CD8-positive, alpha-beta T cell (primary cell): ENCODE measurements at regions of chr19 and their contacts with region 1.

Region 1: GRCh38 chr19:44207126-44207803 is 5.1 kb upstream of the ZNF227 start:
- DNase-seq: peak; percentile 46 to 92 (median 79)
- ATAC-seq: peak; percentile 82
- H3K4me3 ChIP-seq: peak overlapping the region; percentile 72 to 84
- H3K4me3 Mint-ChIP-seq: peak overlapping the region; percentile 89
- H3K27ac ChIP-seq: peak overlapping the region; percentile 46 to 84
- H3K27ac Mint-ChIP-seq: peak overlapping the region; percentile 89
- H3K4me1 ChIP-seq: peaks cover 8% of the 10 kb centered on the region
- H3K4me1 Mint-ChIP-seq: peaks cover 11% of the 10 kb centered on the region
- H3K27me3 ChIP-seq: peaks cover 0 to 3% of the 10 kb centered on the region in 2 experiments
- H3K27me3 Mint-ChIP-seq: peaks cover 10% of the 10 kb centered on the region
- CTCF ChIP-seq: no peak

Region 2: DNA sequence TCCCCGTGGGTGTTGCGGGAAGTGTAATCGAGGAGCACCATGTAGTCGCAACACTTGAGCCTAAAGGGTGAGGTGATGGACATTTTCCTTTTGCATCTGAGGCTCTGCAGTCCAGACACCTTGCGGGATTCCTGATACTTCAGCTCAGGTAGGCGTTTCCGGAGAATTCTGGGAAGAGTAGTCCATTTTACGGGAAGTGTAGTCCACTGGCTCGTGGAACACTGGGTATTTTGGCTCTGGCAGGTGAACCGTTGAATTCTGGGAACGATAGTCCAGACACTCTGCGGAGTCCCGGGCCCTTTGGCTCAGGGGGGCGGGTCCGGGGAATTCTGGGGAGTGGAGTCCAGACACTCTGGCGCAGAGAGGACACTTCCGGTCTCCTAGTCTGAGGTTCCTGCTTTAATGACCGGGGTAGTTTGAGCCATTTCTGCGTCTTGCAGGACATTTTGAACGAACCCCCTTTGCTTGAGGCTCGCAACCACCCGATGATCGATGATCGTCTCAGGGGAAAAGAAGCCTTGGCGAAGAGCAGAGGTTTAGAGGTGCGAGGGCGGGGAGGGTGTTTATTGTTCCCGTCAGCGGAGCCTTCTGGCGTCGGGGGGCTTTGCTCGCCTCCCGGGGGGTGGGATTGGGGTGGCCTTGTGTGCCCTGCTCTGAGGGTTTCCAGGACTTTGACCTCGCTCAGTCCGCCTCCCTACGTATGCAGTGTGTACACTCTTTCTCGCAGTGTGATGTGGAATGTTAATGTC is 155.4 kb before region 1 on chr19 and contains the start of gene ZNF223:
- CTCF ChIA-PET with region 1: no interaction called
- POLR2A ChIA-PET with region 1: no interaction called
- intact Hi-C with region 1: loop called in 1 of 2 experiments (anchors 1 kb)
- DNase-seq: peak; percentile 9 to 85 (median 68)
- ATAC-seq: peak; percentile 84
- H3K4me3 ChIP-seq: peak within 1 kb of the TSS; percentile 71 to 77
- H3K4me3 Mint-ChIP-seq: peak within 1 kb of the TSS; percentile 93
- H3K27ac ChIP-seq: peak within 1 kb of the TSS in 1 of 2 experiments; percentile 40
- H3K27ac Mint-ChIP-seq: peak within 1 kb of the TSS; percentile 85
- H3K4me1 ChIP-seq: peaks cover 11% of the 10 kb centered on the region
- H3K4me1 Mint-ChIP-seq: peaks cover 38% of the 10 kb centered on the region
- H3K27me3 ChIP-seq: no peaks in the 10 kb centered on the region
- H3K27me3 Mint-ChIP-seq: no peaks in the 10 kb centered on the region
- CTCF ChIP-seq: no peak
- total RNA-seq, gene ZNF223: 0.72 to 1.3 TPM

Region 3: DNA sequence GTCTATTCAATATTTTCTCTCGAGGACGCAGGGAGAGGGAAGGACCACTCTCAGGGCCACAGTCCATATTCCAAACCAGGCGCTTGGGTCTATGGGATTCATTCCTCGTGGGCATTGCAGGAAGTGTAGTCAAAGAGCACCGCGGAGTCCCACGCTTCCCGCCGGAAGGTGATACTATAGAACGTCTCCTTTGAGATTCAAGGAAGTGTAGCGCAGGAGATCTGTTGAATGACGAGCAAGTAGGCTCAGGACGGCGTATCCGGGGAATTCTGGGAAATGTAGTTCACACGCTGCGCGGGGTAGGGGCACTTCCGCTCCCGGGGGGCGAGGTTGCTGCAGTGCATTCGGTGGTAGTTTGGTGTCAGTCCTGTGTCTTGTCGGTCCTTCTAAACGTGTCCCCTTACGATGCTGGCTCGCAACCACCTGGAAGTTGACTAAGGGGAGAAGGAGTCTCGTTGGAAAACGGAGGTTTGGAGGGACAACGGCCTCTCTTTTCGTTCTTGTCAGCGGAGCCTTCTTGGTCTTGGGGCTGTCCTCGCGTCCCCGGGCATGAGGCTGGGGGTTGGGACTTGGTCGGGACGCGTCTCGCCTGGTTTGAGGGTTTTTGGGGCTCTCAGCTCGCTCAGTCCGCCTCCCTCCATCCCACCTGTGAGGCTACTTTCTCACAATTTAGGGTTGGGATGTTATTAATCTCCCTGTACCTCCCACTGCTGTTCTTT is 135.3 kb before region 1 on chr19 and contains the start of gene ZNF284:
- CTCF ChIA-PET with region 1: no interaction called
- POLR2A ChIA-PET with region 1: no interaction called
- intact Hi-C with region 1: loop called (anchors 1 kb)
- DNase-seq: peak; percentile 60 to 93 (median 83)
- ATAC-seq: peak; percentile 99
- H3K4me3 ChIP-seq: peak within 1 kb of the TSS; percentile 65 to 73
- H3K4me3 Mint-ChIP-seq: peak within 1 kb of the TSS; percentile 91
- H3K27ac ChIP-seq: peak within 1 kb of the TSS; percentile 2 to 59
- H3K27ac Mint-ChIP-seq: peak within 1 kb of the TSS; percentile 79
- H3K4me1 ChIP-seq: peaks cover 16% of the 10 kb centered on the region
- H3K4me1 Mint-ChIP-seq: peaks cover 36% of the 10 kb centered on the region
- H3K27me3 ChIP-seq: no peaks in the 10 kb centered on the region
- H3K27me3 Mint-ChIP-seq: no peaks in the 10 kb centered on the region
- CTCF ChIP-seq: no peak
- total RNA-seq, gene ZNF284: 0.64 to 1.2 TPM

Region 4: GRCh38 chr19:44141191-44142058 is 65.8 kb before region 1 on chr19 and contains the start of gene ZNF234:
- CTCF ChIA-PET with region 1: no interaction called
- POLR2A ChIA-PET with region 1: interaction called, 5 read pairs
- intact Hi-C with region 1: loop called (anchors 1 to 2 kb)
- DNase-seq: peak; percentile 22 to 86 (median 68)
- ATAC-seq: peak; percentile 93
- H3K4me3 ChIP-seq: peak within 1 kb of the TSS; percentile 77 to 82
- H3K4me3 Mint-ChIP-seq: peak within 1 kb of the TSS; percentile 96
- H3K27ac ChIP-seq: peak within 1 kb of the TSS; percentile 34 to 76
- H3K27ac Mint-ChIP-seq: peak within 1 kb of the TSS; percentile 85
- H3K4me1 ChIP-seq: peaks cover 17% of the 10 kb centered on the region
- H3K4me1 Mint-ChIP-seq: peaks cover 25% of the 10 kb centered on the region
- H3K27me3 ChIP-seq: no peaks in the 10 kb centered on the region
- H3K27me3 Mint-ChIP-seq: no peaks in the 10 kb centered on the region
- CTCF ChIP-seq: no peak
- total RNA-seq, gene ZNF234: 2.2 to 2.4 TPM

Region 5: GRCh38 chr19:44304659-44305193 is 97.5 kb after region 1 on chr19 and contains the start of gene ZNF235:
- CTCF ChIA-PET with region 1: interaction called, 3 read pairs
- POLR2A ChIA-PET with region 1: interaction called, 5 read pairs
- intact Hi-C with region 1: loop called (anchors 1 to 2 kb)
- DNase-seq: peak; percentile 22 to 89 (median 70)
- ATAC-seq: peak; percentile 96
- H3K4me3 ChIP-seq: peak within 1 kb of the TSS; percentile 75 to 77
- H3K4me3 Mint-ChIP-seq: peak within 1 kb of the TSS; percentile 94
- H3K27ac ChIP-seq: peak within 1 kb of the TSS; percentile 26 to 52
- H3K27ac Mint-ChIP-seq: peak within 1 kb of the TSS; percentile 85
- H3K4me1 ChIP-seq: peaks cover 15% of the 10 kb centered on the region
- H3K4me1 Mint-ChIP-seq: peaks cover 35% of the 10 kb centered on the region
- H3K27me3 ChIP-seq: no peaks in the 10 kb centered on the region
- H3K27me3 Mint-ChIP-seq: peaks cover 7% of the 10 kb centered on the region
- CTCF ChIP-seq: no peak
- total RNA-seq, gene ZNF235: 2.6 to 3.7 TPM

Region 6: DNA sequence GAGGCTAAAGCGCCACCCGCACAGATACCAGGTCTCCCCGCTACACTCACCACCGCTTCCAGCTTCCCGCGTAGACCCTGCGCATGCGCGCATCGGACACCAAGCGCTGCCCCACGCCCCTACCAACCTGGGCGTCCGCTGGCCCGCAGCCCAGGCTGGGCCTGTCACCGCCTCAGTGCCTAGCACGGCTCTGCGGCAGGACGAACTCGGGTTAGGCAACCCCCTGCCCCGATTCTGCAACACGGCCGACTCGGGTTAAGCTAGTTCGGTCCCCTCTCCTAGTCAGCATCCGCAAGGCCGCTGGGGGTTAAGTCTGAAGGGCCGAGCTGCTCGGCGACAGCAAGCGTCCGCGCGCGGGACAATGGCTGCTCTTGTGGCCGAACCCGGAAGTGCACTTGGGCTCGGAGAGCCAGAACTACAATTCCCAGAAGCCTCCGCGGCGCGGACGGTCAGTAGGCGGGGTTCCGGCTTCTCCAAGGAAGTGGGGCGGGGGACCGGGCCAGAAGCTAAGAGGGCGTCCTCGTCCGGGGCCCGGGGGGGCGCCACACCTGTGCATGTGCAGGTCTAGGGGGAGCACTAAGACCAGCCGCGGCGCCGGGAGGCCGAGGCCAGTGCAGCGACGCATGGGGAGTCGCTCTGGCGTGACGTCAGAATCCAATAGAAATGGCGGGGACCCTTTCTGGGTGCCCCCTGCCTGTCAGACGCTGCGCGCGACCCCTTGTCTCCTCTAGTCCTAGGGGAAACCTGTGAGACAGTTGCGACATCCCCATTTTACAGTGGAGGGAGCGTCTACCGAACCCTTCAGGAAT is 293.1 kb after region 1 on chr19 and contains the start of gene ZNF180:
- CTCF ChIA-PET with region 1: no interaction called
- POLR2A ChIA-PET with region 1: interaction called, 3 read pairs
- intact Hi-C with region 1: loop called (anchors 1 to 2 kb)
- DNase-seq: peak; percentile 89 to 98 (median 96)
- ATAC-seq: peak; percentile 96
- H3K4me3 ChIP-seq: peak within 1 kb of the TSS; percentile 86 to 90
- H3K4me3 Mint-ChIP-seq: peak within 1 kb of the TSS; percentile 92
- H3K27ac ChIP-seq: peak within 1 kb of the TSS; percentile 60 to 77
- H3K27ac Mint-ChIP-seq: peak within 1 kb of the TSS; percentile 92
- H3K4me1 ChIP-seq: peaks cover 21% of the 10 kb centered on the region
- H3K4me1 Mint-ChIP-seq: peaks cover 34% of the 10 kb centered on the region
- H3K27me3 ChIP-seq: no peaks in the 10 kb centered on the region
- H3K27me3 Mint-ChIP-seq: peaks cover 10% of the 10 kb centered on the region
- CTCF ChIP-seq: peak; percentile 35
- total RNA-seq, gene ZNF180: 8.5 to 8.8 TPM

Region 7: DNA sequence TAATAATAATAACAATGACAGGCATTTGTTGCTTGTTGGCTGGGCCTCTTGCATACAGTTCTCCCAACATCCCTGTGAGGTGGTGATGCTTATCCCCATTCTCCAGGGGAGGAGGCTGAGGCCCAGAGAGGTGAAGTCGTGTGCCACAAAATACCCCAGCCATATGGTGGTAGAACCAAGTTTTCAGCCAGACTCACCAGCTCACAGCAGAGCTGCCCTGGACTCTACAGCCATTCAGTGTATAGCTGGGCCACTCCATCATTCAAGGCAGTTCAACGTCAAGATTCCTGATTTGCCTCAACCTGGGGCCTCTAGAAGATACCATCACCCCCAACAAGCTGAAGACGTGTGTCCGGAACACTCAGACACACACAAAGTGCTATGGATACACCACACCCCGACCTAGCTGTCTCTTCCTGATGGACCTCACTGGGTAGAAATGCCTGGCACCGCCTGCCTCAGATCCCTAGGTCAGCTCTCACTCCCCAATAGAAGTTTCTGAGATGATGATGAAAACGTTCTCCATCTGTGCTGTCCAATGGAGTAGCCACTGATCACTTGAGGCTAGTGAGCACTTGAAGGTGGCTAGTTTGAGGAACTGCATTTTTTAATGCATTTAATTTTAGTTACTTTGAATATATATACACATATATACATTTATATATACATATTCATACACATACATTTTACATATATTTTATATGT is 459.7 kb after region 1 on chr19:
- CTCF ChIA-PET with region 1: no interaction called
- POLR2A ChIA-PET with region 1: no interaction called
- intact Hi-C with region 1: no loop called
- DNase-seq: no peak
- ATAC-seq: no peak
- H3K4me3 ChIP-seq: no peak overlapping the region
- H3K4me3 Mint-ChIP-seq: no peak overlapping the region
- H3K27ac ChIP-seq: no peak overlapping the region
- H3K27ac Mint-ChIP-seq: no peak overlapping the region
- H3K4me1 ChIP-seq: no peaks in the 10 kb centered on the region
- H3K4me1 Mint-ChIP-seq: no peaks in the 10 kb centered on the region
- H3K27me3 ChIP-seq: no peaks in the 10 kb centered on the region
- H3K27me3 Mint-ChIP-seq: peaks cover 4% of the 10 kb centered on the region
- CTCF ChIP-seq: no peak